ENCODE measurements at regions of chr14 and their contacts with region 1.

Region 1: DNA sequence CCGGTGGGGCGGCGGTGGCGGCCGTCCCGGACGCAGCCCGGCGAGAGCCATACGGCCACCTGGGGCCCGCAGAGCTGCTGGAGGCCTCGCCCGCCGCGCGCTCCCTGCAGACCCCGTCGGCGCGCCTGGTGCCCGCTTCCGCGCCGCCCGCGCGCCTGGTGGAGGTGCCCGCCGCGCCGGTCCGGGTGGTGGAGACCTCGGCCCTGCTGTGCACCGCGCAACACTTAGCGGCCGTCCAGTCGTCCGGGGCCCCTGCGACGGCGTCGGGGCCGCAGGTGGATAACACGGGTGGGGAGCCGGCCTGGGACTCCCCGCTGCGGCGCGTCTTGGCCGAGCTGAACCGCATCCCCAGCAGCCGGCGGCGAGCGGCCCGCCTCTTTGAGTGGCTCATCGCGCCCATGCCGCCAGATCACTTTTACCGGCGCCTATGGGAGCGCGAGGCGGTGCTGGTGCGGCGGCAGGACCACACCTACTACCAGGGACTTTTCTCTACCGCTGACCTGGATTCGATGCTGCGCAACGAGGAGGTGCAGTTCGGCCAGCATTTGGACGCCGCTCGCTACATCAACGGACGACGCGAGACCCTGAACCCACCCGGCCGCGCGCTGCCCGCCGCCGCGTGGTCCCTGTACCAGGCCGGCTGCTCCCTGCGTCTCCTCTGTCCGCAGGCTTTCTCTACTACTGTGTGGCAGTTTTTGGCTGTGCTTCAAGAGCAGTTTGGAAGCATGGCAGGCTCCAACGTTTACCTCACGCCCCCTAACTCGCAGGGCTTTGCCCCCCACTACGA is 716 bp downstream of the RIOX1 start:
- DNase-seq: peak; percentile 65 to 67
- ATAC-seq: peak; percentile 83 to 87
- H3K4me3 ChIP-seq: peak overlapping the region; percentile 81
- H3K27ac ChIP-seq: peak overlapping the region; percentile 88 to 99
- H3K4me1 ChIP-seq: peaks cover 18% of the 10 kb centered on the region; the same call in 2 of the 3 replicates
- CTCF ChIP-seq: no peak
- EP300 ChIP-seq: no peak
- POLR2A ChIP-seq: peak; percentile 54
- RAD21 ChIP-seq: no peak

Region 2: GRCh38 chr14:73458151-73458976 is 33.1 kb before region 1 on chr14 and contains the start of gene NUMB:
- CTCF ChIA-PET with region 1: no interaction called
- POLR2A ChIA-PET with region 1: interaction called, 10 read pairs
- DNase-seq: peak; percentile 99 to 100
- ATAC-seq: peak; percentile 91 to 94
- H3K4me3 ChIP-seq: peak within 1 kb of the TSS; percentile 89
- H3K27ac ChIP-seq: peak within 1 kb of the TSS; percentile 91 to 95
- H3K4me1 ChIP-seq: peaks cover 70% of the 10 kb centered on the region
- CTCF ChIP-seq: no peak
- EP300 ChIP-seq: no peak
- POLR2A ChIP-seq: peak; percentile 68
- RAD21 ChIP-seq: no peak
- polyA plus RNA-seq, gene NUMB: 134 and 151 TPM in 2 replicates

Region 3: GRCh38 chr14:73568381-73568781 is 76.9 kb after region 1 on chr14:
- CTCF ChIA-PET with region 1: no interaction called
- POLR2A ChIA-PET with region 1: interaction called, 22 read pairs
- DNase-seq: no peak
- ATAC-seq: no peak
- H3K4me3 ChIP-seq: peak overlapping the region; percentile 55
- H3K27ac ChIP-seq: peak overlapping the region; percentile 94 to 98
- H3K4me1 ChIP-seq: peaks cover 21% of the 10 kb centered on the region
- CTCF ChIP-seq: no peak
- EP300 ChIP-seq: no peak
- POLR2A ChIP-seq: no peak
- RAD21 ChIP-seq: no peak

Region 4: GRCh38 chr14:73613046-73613383 is 121.6 kb after region 1 on chr14:
- CTCF ChIA-PET with region 1: no interaction called
- POLR2A ChIA-PET with region 1: interaction called, 11 read pairs
- DNase-seq: peak in 1 of 2 experiments; percentile 52
- ATAC-seq: peak; percentile 66 to 73
- H3K4me3 ChIP-seq: peak overlapping the region; percentile 63
- H3K27ac ChIP-seq: peak overlapping the region; percentile 74 to 87
- H3K4me1 ChIP-seq: peaks cover 3% of the 10 kb centered on the region; the same call in 1 of the 3 replicates
- CTCF ChIP-seq: no peak
- EP300 ChIP-seq: no peak
- POLR2A ChIP-seq: no peak
- RAD21 ChIP-seq: no peak